Activated CD4-positive, alpha-beta memory T cell treated with anti-CD3 and anti-CD28 coated beads for 36 hours (primary cell): ENCODE measurements at regions of chr15 and their contacts with region 1.

Region 1: GRCh38 chr15:74127260-74127953 is 3.0 kb upstream of the ISLR2 start:
- DNase-seq: peak; percentile 89
- H3K4me3 Mint-ChIP-seq: no peak overlapping the region
- H3K27ac Mint-ChIP-seq: no peak overlapping the region
- H3K4me1 Mint-ChIP-seq: peaks cover 18% of the 10 kb centered on the region
- H3K27me3 Mint-ChIP-seq: peaks cover 59% of the 10 kb centered on the region

Region 2: DNA sequence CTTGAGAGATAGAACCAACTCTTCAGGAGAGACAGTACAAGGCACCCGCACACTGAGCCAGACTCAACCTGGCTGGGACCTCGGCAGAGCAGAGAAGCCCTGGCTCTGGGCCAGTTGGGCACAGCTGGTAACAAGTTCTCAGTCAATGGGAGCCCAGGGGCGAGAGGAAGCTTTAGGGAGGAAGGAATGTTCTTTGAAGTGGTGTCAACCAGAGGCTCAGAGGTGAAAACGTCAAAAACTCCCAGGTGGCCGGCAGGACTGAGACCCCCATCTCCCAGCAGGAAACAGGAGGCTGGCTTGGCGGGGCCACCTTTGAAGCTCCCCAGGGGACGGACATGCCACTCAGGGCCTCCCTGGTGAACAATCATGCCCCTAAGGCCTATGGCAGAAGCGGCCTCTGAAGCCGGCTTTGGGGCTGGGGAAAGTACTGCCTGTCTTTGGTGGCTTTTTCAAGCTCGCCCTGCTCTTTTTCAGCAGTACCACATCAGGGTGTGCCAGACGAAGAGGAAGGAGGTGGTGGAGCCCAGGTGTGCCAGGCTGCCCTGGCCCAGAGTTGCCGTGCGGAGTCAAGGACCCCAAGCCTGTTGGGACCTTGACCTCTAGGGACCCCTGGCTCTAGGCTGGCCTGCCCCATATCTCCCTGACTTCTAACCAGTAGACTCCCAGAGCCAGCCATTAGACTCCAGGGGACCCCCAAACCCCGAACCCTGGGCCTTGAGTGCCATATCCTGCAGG is 270.8 kb before region 1 on chr15:
- CTCF ChIA-PET with region 1: no interaction called
- POLR2A ChIA-PET with region 1: no interaction called
- intact Hi-C with region 1: no loop called
- DNase-seq: no peak
- H3K4me3 Mint-ChIP-seq: no peak overlapping the region
- H3K27ac Mint-ChIP-seq: no peak overlapping the region
- H3K4me1 Mint-ChIP-seq: no peaks in the 10 kb centered on the region
- H3K27me3 Mint-ChIP-seq: peaks cover 42% of the 10 kb centered on the region

Region 3: DNA sequence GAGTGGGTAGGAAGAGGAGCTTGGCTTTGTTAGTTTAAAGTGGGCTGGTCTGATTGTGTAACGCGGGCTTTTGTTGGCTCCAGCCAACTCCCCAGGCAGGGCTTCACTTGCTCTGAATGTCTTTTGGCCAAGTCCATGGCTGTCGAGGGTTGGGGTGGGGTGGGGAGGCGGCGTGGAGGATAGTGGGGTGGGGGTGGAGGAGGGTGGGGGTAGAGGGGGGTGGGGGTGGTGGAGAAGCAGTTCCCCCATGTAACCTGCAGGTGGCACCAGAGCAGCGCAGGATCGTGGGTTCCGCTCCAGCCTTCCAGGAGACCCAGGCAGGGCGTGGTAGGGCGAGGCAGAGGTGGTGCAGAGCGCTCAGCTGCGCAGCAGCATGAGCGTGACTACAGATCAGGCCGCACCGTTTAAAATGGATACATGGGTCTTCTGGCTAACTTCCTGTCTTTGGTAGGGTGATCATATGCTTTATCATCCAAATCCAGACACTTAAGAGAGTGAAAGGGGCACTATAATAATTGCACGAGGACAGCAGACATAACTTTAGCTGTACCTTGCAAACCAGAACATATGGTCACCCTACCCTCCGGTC is 73.4 kb before region 1 on chr15:
- CTCF ChIA-PET with region 1: interaction called, 4 read pairs
- POLR2A ChIA-PET with region 1: no interaction called
- intact Hi-C with region 1: loop called (anchors 5 kb)
- DNase-seq: peak; percentile 83
- H3K4me3 Mint-ChIP-seq: no peak overlapping the region
- H3K27ac Mint-ChIP-seq: no peak overlapping the region
- H3K4me1 Mint-ChIP-seq: peaks cover 5% of the 10 kb centered on the region
- H3K27me3 Mint-ChIP-seq: no peaks in the 10 kb centered on the region

Region 4: GRCh38 chr15:74302821-74303359 is 175.5 kb after region 1 on chr15:
- CTCF ChIA-PET with region 1: interaction called, 12 read pairs
- POLR2A ChIA-PET with region 1: no interaction called
- intact Hi-C with region 1: loop called (anchors 5 kb)
- DNase-seq: peak; percentile 53
- H3K4me3 Mint-ChIP-seq: no peak overlapping the region
- H3K27ac Mint-ChIP-seq: no peak overlapping the region
- H3K4me1 Mint-ChIP-seq: no peaks in the 10 kb centered on the region
- H3K27me3 Mint-ChIP-seq: peaks cover 47% of the 10 kb centered on the region

Region 5: GRCh38 chr15:74307827-74308644 is 180.6 kb after region 1 on chr15:
- CTCF ChIA-PET with region 1: interaction called, 12 read pairs
- POLR2A ChIA-PET with region 1: no interaction called
- intact Hi-C with region 1: loop called (anchors 5 kb)
- DNase-seq: peak; percentile 49
- H3K4me3 Mint-ChIP-seq: no peak overlapping the region
- H3K27ac Mint-ChIP-seq: no peak overlapping the region
- H3K4me1 Mint-ChIP-seq: no peaks in the 10 kb centered on the region
- H3K27me3 Mint-ChIP-seq: peaks cover 26% of the 10 kb centered on the region

Region 6: GRCh38 chr15:74322181-74323076 is 195.0 kb after region 1 on chr15:
- CTCF ChIA-PET with region 1: interaction called, 32 read pairs
- POLR2A ChIA-PET with region 1: interaction called, 3 read pairs
- intact Hi-C with region 1: loop called (anchors 2 kb)
- DNase-seq: peak; percentile 70
- H3K4me3 Mint-ChIP-seq: no peak overlapping the region
- H3K27ac Mint-ChIP-seq: no peak overlapping the region
- H3K4me1 Mint-ChIP-seq: no peaks in the 10 kb centered on the region
- H3K27me3 Mint-ChIP-seq: no peaks in the 10 kb centered on the region